ENCODE measurements at regions of chr1 and their contacts with region 1.

Region 1: GRCh38 chr1:117895482-117896114 is 33.8 kb downstream of the GDAP2 start:
- DNase-seq: peak; percentile 41 to 59 (median 51)
- H3K4me3 ChIP-seq: no peak overlapping the region
- H3K4me3 Mint-ChIP-seq: no peak overlapping the region
- H3K27ac ChIP-seq: no peak overlapping the region
- H3K27ac Mint-ChIP-seq: peak overlapping the region in 5 of 7 donors; percentile 3 to 66 (median 33)
- H3K4me1 ChIP-seq: no peaks in the 10 kb centered on the region
- H3K4me1 Mint-ChIP-seq: peaks cover 0 to 4% (median 1%) of the 10 kb centered on the region in 4 donors
- H3K27me3 ChIP-seq: no peaks in the 10 kb centered on the region
- H3K27me3 Mint-ChIP-seq: no peaks in the 10 kb centered on the region

Region 2: GRCh38 chr1:117067533-117068370 is 827.8 kb before region 1 on chr1:
- CTCF ChIA-PET with region 1: interaction called, 6 read pairs
- POLR2A ChIA-PET with region 1: no interaction called
- intact Hi-C with region 1: loop called (anchors 2 kb)
- DNase-seq: peak in 4 of 5 donors; percentile 22 to 45 (median 40)
- H3K4me3 ChIP-seq: no peak overlapping the region
- H3K4me3 Mint-ChIP-seq: no peak overlapping the region
- H3K27ac ChIP-seq: no peak overlapping the region
- H3K27ac Mint-ChIP-seq: no peak overlapping the region
- H3K4me1 ChIP-seq: peaks cover 7% of the 10 kb centered on the region
- H3K4me1 Mint-ChIP-seq: peaks cover 8 to 23% (median 17%) of the 10 kb centered on the region in 4 donors
- H3K27me3 ChIP-seq: no peaks in the 10 kb centered on the region
- H3K27me3 Mint-ChIP-seq: no peaks in the 10 kb centered on the region

Region 3: GRCh38 chr1:117512743-117513321 is 382.8 kb before region 1 on chr1:
- CTCF ChIA-PET with region 1: interaction called, 10 read pairs
- POLR2A ChIA-PET with region 1: no interaction called
- intact Hi-C with region 1: loop called (anchors 1 kb)
- DNase-seq: peak in 4 of 5 donors; percentile 23 to 35 (median 28)
- H3K4me3 ChIP-seq: no peak overlapping the region
- H3K4me3 Mint-ChIP-seq: no peak overlapping the region
- H3K27ac ChIP-seq: no peak overlapping the region
- H3K27ac Mint-ChIP-seq: no peak overlapping the region
- H3K4me1 ChIP-seq: no peaks in the 10 kb centered on the region
- H3K4me1 Mint-ChIP-seq: peaks cover 0 to 1% (median 0%) of the 10 kb centered on the region in 4 donors
- H3K27me3 ChIP-seq: no peaks in the 10 kb centered on the region
- H3K27me3 Mint-ChIP-seq: no peaks in the 10 kb centered on the region

Region 4: DNA sequence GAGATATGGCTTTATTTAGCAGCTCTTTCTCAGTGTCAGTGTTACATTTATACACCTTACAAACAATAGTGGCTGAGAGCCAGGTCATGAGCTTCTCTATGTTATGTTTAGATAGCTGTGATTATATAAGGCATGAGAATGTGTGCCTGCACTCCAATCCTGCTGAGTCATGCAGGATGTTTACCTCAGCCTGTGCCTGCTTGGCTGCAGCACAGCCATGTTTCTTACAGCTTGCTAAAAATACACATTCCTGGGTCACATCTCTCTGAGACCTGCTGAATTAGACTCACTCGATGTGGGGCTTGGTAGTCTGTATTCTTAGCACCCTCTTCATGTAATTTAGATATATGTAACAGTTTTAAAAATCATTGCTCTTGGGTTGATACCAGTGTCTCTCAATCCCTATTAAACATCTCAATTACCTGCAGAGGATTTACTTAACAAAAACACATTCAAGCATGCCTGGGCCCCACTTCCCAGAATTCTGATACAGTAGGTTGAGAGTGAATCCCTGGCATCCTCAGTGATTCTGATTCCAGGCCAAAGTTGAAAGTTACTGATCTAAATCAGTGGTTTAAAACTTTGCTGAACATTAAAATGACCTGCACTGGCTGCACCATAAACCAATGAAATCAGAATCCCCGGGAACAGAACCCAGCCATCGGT is 73.7 kb before region 1 on chr1:
- CTCF ChIA-PET with region 1: no interaction called
- POLR2A ChIA-PET with region 1: no interaction called
- intact Hi-C with region 1: no loop called
- DNase-seq: no peak
- H3K4me3 ChIP-seq: no peak overlapping the region
- H3K4me3 Mint-ChIP-seq: no peak overlapping the region
- H3K27ac ChIP-seq: no peak overlapping the region
- H3K27ac Mint-ChIP-seq: no peak overlapping the region
- H3K4me1 ChIP-seq: no peaks in the 10 kb centered on the region
- H3K4me1 Mint-ChIP-seq: no peaks in the 10 kb centered on the region
- H3K27me3 ChIP-seq: no peaks in the 10 kb centered on the region
- H3K27me3 Mint-ChIP-seq: peaks cover 6 to 15% of the 10 kb centered on the region in 2 donors

Region 5: GRCh38 chr1:117877823-117878222 is 17.8 kb before region 1 on chr1:
- CTCF ChIA-PET with region 1: interaction called, 34 read pairs
- POLR2A ChIA-PET with region 1: no interaction called
- intact Hi-C with region 1: no loop called
- DNase-seq: no peak
- H3K4me3 ChIP-seq: no peak overlapping the region
- H3K4me3 Mint-ChIP-seq: no peak overlapping the region
- H3K27ac ChIP-seq: no peak overlapping the region
- H3K27ac Mint-ChIP-seq: no peak overlapping the region
- H3K4me1 ChIP-seq: no peaks in the 10 kb centered on the region
- H3K4me1 Mint-ChIP-seq: peaks cover 0 to 2% (median 0%) of the 10 kb centered on the region in 4 donors
- H3K27me3 ChIP-seq: no peaks in the 10 kb centered on the region
- H3K27me3 Mint-ChIP-seq: no peaks in the 10 kb centered on the region

Region 6: GRCh38 chr1:117883620-117884019 is 12.0 kb before region 1 on chr1:
- CTCF ChIA-PET with region 1: interaction called, 34 read pairs
- POLR2A ChIA-PET with region 1: no interaction called
- intact Hi-C with region 1: no loop called
- DNase-seq: no peak
- H3K4me3 ChIP-seq: no peak overlapping the region
- H3K4me3 Mint-ChIP-seq: no peak overlapping the region
- H3K27ac ChIP-seq: no peak overlapping the region
- H3K27ac Mint-ChIP-seq: no peak overlapping the region
- H3K4me1 ChIP-seq: no peaks in the 10 kb centered on the region
- H3K4me1 Mint-ChIP-seq: peaks cover 0 to 2% (median 0%) of the 10 kb centered on the region in 4 donors
- H3K27me3 ChIP-seq: no peaks in the 10 kb centered on the region
- H3K27me3 Mint-ChIP-seq: no peaks in the 10 kb centered on the region

Region 7: GRCh38 chr1:117929173-117929989 is 33.8 kb after region 1 on chr1 and contains the starts of genes GDAP2 and WDR3:
- CTCF ChIA-PET with region 1: interaction called, 10 read pairs
- POLR2A ChIA-PET with region 1: no interaction called
- intact Hi-C with region 1: no loop called
- DNase-seq: peak; percentile 94 to 99 (median 97)
- H3K4me3 ChIP-seq: peak within 1 kb of the TSS; percentile 66 to 81
- H3K4me3 Mint-ChIP-seq: peak within 1 kb of the TSS; percentile 94 to 97 (median 96)
- H3K27ac ChIP-seq: peak within 1 kb of the TSS; percentile 89
- H3K27ac Mint-ChIP-seq: peak within 1 kb of the TSS; percentile 93 to 99 (median 97)
- H3K4me1 ChIP-seq: peaks cover 41% of the 10 kb centered on the region
- H3K4me1 Mint-ChIP-seq: peaks cover 39 to 63% (median 51%) of the 10 kb centered on the region in 4 donors
- H3K27me3 ChIP-seq: no peaks in the 10 kb centered on the region
- H3K27me3 Mint-ChIP-seq: no peaks in the 10 kb centered on the region
- total RNA-seq, gene GDAP2: 28.1 to 29.5 TPM
- total RNA-seq, gene WDR3: 26.5 to 29.3 TPM

Region 8: GRCh38 chr1:117959364-117959763 is 63.8 kb after region 1 on chr1:
- CTCF ChIA-PET with region 1: no interaction called
- POLR2A ChIA-PET with region 1: no interaction called
- intact Hi-C with region 1: no loop called
- DNase-seq: no peak
- H3K4me3 ChIP-seq: no peak overlapping the region
- H3K4me3 Mint-ChIP-seq: no peak overlapping the region
- H3K27ac ChIP-seq: no peak overlapping the region
- H3K27ac Mint-ChIP-seq: no peak overlapping the region
- H3K4me1 ChIP-seq: no peaks in the 10 kb centered on the region
- H3K4me1 Mint-ChIP-seq: no peaks in the 10 kb centered on the region
- H3K27me3 ChIP-seq: no peaks in the 10 kb centered on the region
- H3K27me3 Mint-ChIP-seq: no peaks in the 10 kb centered on the region

Measured in CD4-positive, alpha-beta memory T cell (primary cell).